ENCODE measurements at regions of chr9 and their contacts with region 1.

Region 1: DNA sequence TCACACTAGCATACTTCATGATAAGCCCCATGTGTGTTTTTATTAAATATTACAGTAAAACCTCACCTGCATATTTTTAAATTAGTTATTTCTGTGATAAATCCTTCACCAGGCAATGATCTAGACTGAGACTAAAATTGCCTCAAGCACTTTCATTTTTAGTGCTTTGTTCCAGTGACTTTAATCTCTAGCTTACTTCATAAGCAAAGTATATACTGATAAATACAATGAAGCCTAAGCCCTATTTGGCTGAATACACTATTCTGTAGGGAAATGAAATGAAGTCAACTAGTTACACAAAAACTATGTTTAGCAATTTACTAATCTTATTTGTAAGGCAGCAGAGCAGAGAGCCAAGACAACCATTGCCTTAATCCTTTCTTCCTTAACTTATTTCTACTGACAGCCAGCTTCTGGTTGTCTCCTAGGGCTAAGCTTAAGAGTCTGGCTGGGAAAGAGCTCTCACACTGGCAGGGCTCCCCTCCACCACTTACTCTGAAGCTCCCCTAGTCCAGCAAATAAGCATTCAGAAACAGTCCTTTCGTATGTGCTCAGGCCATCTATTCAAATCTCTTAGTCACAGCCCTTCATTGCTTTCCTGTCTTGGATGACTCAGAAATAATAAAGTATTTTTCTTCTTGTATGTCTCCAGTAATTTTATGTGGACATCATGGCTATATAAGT is 31.4 kb upstream of the MTAP start:
- DNase-seq: peak; percentile 88
- ATAC-seq: peak; percentile 93
- H3K4me3 ChIP-seq: peak overlapping the region; percentile 11; the same call in 1 of the 2 replicates
- H3K27ac ChIP-seq: peak overlapping the region; percentile 38; the same call in 1 of the 2 replicates
- H3K4me1 ChIP-seq: peaks cover 10% of the 10 kb centered on the region
- H3K27me3 ChIP-seq: no peaks in the 10 kb centered on the region
- CTCF ChIP-seq: no peak
- POLR2A ChIP-seq: no peak
- RAD21 ChIP-seq: no peak

Region 2: GRCh38 chr9:21591221-21592062 is 179.6 kb before region 1 on chr9:
- CTCF ChIA-PET with region 1: no interaction called
- POLR2A ChIA-PET with region 1: no interaction called
- dilution Hi-C with region 1: no loop called
- in situ Hi-C with region 1: loop called (anchors 10 kb)
- intact Hi-C with region 1: no loop called
- DNase-seq: peak; percentile 99
- ATAC-seq: peak; percentile 97
- H3K4me3 ChIP-seq: no peak overlapping the region
- H3K27ac ChIP-seq: peak overlapping the region; percentile 77
- H3K4me1 ChIP-seq: peaks cover 2% of the 10 kb centered on the region; the same call in 1 of the 2 replicates
- H3K27me3 ChIP-seq: no peaks in the 10 kb centered on the region
- CTCF ChIP-seq: no peak
- POLR2A ChIP-seq: peak; percentile 77; the same call in 1 of the 2 replicates
- RAD21 ChIP-seq: no peak; the same call in 1 of the 2 replicates

Region 3: GRCh38 chr9:21788752-21789151 is 17.7 kb after region 1 on chr9:
- CTCF ChIA-PET with region 1: no interaction called
- POLR2A ChIA-PET with region 1: no interaction called
- dilution Hi-C with region 1: no loop called
- in situ Hi-C with region 1: no loop called
- intact Hi-C with region 1: no loop called
- DNase-seq: no peak
- ATAC-seq: no peak
- H3K4me3 ChIP-seq: no peak overlapping the region
- H3K27ac ChIP-seq: no peak overlapping the region
- H3K4me1 ChIP-seq: no peaks in the 10 kb centered on the region
- H3K27me3 ChIP-seq: no peaks in the 10 kb centered on the region
- CTCF ChIP-seq: no peak
- POLR2A ChIP-seq: no peak
- RAD21 ChIP-seq: no peak